Activated CD4-positive, alpha-beta memory T cell treated with anti-CD3 and anti-CD28 coated beads for 36 hours (primary cell): ENCODE measurements at regions of chr18 and their contacts with region 1.

Region 1: DNA sequence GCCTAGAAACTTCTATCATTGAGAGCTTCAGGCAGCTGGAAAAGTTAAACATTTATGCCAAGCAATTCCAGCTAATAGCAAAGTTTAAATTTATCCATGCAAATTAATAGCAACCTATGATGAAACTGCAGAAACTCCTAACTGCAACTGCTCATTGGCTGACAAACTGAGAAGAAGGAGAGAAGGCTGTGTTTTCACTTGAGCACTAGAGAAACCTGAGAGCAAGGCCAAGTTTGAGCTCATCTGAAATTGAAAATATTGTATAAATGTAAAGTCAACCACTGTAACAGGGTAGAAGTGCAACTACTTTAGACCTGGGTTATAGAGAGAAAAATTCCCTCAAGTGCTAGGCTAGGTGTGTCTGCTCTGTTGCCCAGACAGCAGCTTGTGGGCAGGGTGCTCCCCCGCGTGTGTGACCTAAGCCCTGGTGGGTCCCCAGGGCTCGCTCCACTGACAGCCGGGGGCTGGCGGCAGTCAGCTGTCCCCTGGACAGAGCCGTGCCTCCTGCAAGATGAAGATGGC is 50.2 kb downstream of the CABYR start:
- DNase-seq: no peak
- H3K4me3 Mint-ChIP-seq: no peak overlapping the region
- H3K27ac Mint-ChIP-seq: no peak overlapping the region
- H3K4me1 Mint-ChIP-seq: no peaks in the 10 kb centered on the region
- H3K27me3 Mint-ChIP-seq: peaks cover 4% of the 10 kb centered on the region

Region 2: DNA sequence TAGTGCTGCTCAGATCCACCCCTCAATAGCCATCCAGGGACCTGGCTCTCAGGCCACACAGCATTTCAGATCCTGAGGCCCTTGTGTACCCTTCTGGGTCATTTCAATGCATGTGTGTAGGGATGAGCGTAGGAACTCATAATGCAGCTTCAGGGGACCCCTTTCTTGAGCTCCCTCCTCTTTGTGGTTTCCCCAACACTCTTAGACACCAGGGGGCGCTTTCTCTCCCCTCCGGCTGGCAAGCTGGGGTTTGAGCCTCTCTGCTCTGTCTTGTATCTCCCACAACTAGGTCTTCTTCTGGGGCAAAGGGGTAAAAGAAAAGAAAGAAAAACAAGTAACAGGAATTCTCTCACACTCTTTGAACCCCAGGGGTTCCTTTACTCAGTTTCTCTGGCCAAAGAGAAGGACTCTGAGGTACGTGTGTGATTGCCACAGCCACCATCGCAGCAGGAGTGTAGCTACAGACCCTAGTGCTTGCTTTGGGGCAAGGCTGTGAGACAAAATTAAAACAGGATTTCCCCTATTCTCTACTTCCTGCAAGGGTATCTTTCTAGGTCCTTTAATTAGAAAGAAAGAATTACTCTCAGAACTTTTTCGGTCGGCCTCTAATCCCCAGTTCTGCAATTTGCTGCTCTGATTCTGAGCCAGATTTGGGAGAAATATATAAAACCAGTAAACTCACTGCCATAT is 12.2 kb before region 1 on chr18:
- CTCF ChIA-PET with region 1: interaction called, 15 read pairs
- POLR2A ChIA-PET with region 1: interaction called, 3 read pairs
- intact Hi-C with region 1: no loop called
- DNase-seq: peak; percentile 64
- H3K4me3 Mint-ChIP-seq: no peak overlapping the region
- H3K27ac Mint-ChIP-seq: no peak overlapping the region
- H3K4me1 Mint-ChIP-seq: peaks cover 4% of the 10 kb centered on the region
- H3K27me3 Mint-ChIP-seq: no peaks in the 10 kb centered on the region